ENCODE measurements at regions of chr9 and their contacts with region 1.

Region 1: GRCh38 chr9:4662108-4662988 is at the start of gene PLPP6:
- DNase-seq: peak; percentile 78 to 84
- ATAC-seq: peak; percentile 95 to 96
- H3K4me3 ChIP-seq: peak within 1 kb of the TSS; percentile 66 to 87 (median 76)
- H3K27ac ChIP-seq: peak within 1 kb of the TSS; percentile 70 to 83 (median 77)
- H3K4me1 ChIP-seq: peaks cover 19 to 26% of the 10 kb centered on the region in 2 donors
- H3K27me3 ChIP-seq: no peaks in the 10 kb centered on the region
- CTCF ChIP-seq: peak; percentile 15 to 71 (median 57)
- POLR2A ChIP-seq: peak; percentile 16 to 51
- total RNA-seq, gene PLPP6: 2.5 to 3.1 (median 2.5) TPM

Region 2: GRCh38 chr9:4740638-4741364 is 78.5 kb after region 1 on chr9 and contains the start of gene AK3:
- in situ Hi-C with region 1: loop called in 2 of 4 experiments (anchors 5 kb)
- intact Hi-C with region 1: loop called (anchors 1 kb)
- DNase-seq: peak; percentile 77 to 80
- ATAC-seq: peak; percentile 77
- H3K4me3 ChIP-seq: peak within 1 kb of the TSS; percentile 83 to 89 (median 86)
- H3K27ac ChIP-seq: peak within 1 kb of the TSS; percentile 87 to 95 (median 92)
- H3K4me1 ChIP-seq: peaks cover 21% of the 10 kb centered on the region in 2 donors
- H3K27me3 ChIP-seq: no peaks in the 10 kb centered on the region
- CTCF ChIP-seq: peak in 4 of 5 experiments; percentile 7 to 48 (median 20)
- POLR2A ChIP-seq: peak; percentile 89
- total RNA-seq, gene AK3: 163 to 270 (median 188) TPM